Lower leg skin (tissue), 4 donors: ENCODE measurements at regions of chr16 and their contacts with region 1.

Region 1: GRCh38 chr16:4561596-4561995 is 5.5 kb downstream of the C16orf96 start:
- DNase-seq: no peak
- H3K4me3 ChIP-seq: no peak overlapping the region
- CTCF ChIP-seq: no peak
- POLR2A ChIP-seq: no peak

Region 2: GRCh38 chr16:4330277-4330874 is 231.2 kb before region 1 on chr16:
- intact Hi-C with region 1: no loop called
- DNase-seq: peak; percentile 65 to 94
- H3K4me3 ChIP-seq: no peak overlapping the region
- CTCF ChIP-seq: peak in 1 of 3 donors; percentile 78
- POLR2A ChIP-seq: no peak

Region 3: DNA sequence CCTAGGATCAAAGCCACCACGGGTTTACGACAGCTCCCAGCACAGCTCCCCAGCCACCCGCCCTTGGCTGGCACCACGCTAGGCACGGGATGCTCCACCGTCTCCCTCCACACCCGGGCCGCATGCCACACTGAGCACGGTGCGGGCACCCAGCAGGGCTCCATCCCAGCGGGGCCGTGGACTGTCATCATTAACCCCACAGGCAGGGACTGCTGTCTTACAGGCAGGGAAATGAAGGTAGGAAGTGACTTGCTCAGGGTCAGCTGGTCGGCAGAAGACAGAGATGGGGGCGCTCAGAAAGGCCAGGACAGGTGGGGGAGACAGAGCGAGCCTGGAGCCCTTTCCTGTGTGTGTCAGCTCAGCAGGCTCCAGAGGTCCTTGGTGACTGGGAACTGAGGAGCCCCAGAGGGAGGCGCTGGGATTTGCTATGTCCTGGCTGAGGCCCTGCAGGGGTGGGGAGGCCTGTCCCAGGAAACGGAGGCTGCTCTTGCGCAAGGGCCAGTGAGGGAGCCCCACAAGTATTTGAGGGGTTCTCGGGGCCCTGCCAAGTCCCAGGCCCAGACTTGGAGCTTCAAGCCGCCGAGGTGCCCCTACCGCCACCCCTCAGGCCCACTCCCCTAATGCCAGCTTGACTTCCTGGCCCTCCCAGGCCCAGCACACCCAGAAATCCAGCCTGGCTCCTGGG is 49.9 kb after region 1 on chr16:
- intact Hi-C with region 1: loop called (anchors 2 kb)
- DNase-seq: no peak
- H3K4me3 ChIP-seq: no peak overlapping the region
- CTCF ChIP-seq: no peak
- POLR2A ChIP-seq: no peak